ENCODE measurements at regions of chr5 and their contacts with region 1.

Region 1: GRCh38 chr5:143386725-143387124 is 16.8 kb downstream of the NR3C1 start:
- DNase-seq: no peak
- ATAC-seq: no peak
- H3K4me3 ChIP-seq: no peak overlapping the region
- H3K27ac ChIP-seq: no peak overlapping the region
- H3K4me1 ChIP-seq: peaks cover 0 to 57% (median 42%) of the 10 kb centered on the region in 12 donors
- H3K27me3 ChIP-seq: no peaks in the 10 kb centered on the region
- CTCF ChIP-seq: no peak
- POLR2A ChIP-seq: no peak

Region 2: GRCh38 chr5:143314659-143315058 is 72.1 kb before region 1 on chr5:
- intact Hi-C with region 1: loop called in 2 of 10 experiments (anchors 10 kb)
- DNase-seq: no peak
- ATAC-seq: peak in 3 of 4 donors; percentile 26 to 78 (median 70)
- H3K4me3 ChIP-seq: no peak overlapping the region
- H3K27ac ChIP-seq: peak overlapping the region in 1 of 12 donors; percentile 12
- H3K4me1 ChIP-seq: peaks cover 8 to 82% (median 62%) of the 10 kb centered on the region in 12 donors
- H3K27me3 ChIP-seq: no peaks in the 10 kb centered on the region
- CTCF ChIP-seq: no peak
- POLR2A ChIP-seq: no peak

Region 3: GRCh38 chr5:143341807-143342570 is 44.7 kb before region 1 on chr5:
- intact Hi-C with region 1: loop called in 2 of 10 experiments (anchors 5 to 10 kb)
- DNase-seq: no peak
- ATAC-seq: peak in 3 of 4 donors; percentile 41 to 83 (median 48)
- H3K4me3 ChIP-seq: no peak overlapping the region
- H3K27ac ChIP-seq: peak overlapping the region; percentile 0 to 81 (median 52)
- H3K4me1 ChIP-seq: peaks cover 15 to 90% (median 61%) of the 10 kb centered on the region in 12 donors
- H3K27me3 ChIP-seq: no peaks in the 10 kb centered on the region
- CTCF ChIP-seq: no peak
- POLR2A ChIP-seq: no peak

Region 4: DNA sequence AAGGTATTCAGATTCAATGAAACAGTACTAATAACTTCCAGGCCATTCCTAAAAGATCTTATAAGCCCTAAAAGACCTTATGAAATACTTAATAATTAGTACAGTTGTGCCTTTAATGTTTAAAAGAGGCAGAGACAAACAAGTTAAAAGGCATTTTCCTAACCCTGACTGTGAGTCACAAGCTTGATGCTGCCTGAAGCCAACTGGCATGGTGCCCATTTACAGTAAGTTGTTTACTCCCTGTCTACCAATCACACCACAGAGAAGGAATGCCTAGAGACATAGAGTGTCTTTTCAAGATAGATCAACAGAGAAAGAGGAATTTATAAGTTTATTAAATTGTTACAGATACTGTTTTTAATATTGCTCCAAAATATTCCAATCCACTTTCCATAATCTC is 31.0 kb before region 1 on chr5:
- intact Hi-C with region 1: loop called in 1 of 10 experiments (anchors 5 kb)
- DNase-seq: peak; percentile 55 to 86 (median 74)
- ATAC-seq: peak; percentile 77 to 94 (median 86)
- H3K4me3 ChIP-seq: no peak overlapping the region
- H3K27ac ChIP-seq: peak overlapping the region in 6 of 12 donors; percentile 40 to 66 (median 54)
- H3K4me1 ChIP-seq: peaks cover 3 to 95% (median 69%) of the 10 kb centered on the region in 12 donors
- H3K27me3 ChIP-seq: no peaks in the 10 kb centered on the region
- CTCF ChIP-seq: no peak
- POLR2A ChIP-seq: no peak

Measured in heart left ventricle (tissue), 16 donors.